HepG2 (cell line): ENCODE measurements at regions of chr6 and their contacts with region 1.

Region 1: DNA sequence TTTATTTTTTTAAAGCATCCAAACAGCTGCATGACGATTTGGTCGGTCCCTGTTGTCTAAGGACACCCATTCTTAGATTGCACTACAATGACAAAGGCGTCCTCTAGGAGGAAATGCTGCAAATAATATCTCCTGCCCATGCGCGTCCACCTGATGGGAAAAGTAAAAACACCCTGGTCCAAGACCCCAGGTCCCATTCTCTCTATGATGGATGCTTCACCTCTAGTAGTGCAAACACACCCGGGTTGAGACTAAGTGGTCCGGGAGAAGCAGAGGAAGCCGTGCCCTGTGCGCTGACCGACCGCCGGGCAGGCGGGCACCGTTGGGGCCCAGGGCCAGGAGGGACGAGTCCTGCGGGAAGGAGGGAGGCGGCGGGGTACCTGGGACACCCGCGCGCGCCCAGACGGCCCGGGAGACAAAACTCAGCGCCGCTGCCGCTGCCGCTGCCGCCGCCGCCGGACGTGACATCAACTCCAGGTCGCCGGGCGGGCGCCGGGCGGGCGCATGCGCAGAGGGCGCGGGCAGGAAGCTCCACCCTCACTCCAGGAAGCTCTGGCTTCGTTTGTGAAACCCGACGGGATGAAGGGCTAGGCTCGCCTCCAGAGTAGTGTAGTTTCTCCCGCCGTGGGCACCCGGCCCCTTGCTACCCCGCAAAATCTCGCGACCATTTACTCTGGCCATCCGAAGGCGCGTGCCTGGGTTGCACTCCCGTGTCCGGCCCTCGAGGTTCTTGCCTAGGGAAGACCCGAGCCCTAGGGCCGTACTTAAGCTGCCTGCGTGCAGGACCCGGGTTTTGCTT is at the start of gene TBC1D7:
- DNase-seq: peak; percentile 92
- ATAC-seq: peak; percentile 92
- H3K4me3 ChIP-seq: peak within 1 kb of the TSS; percentile 72 to 92 (median 90)
- H3K27ac ChIP-seq: peak within 1 kb of the TSS; percentile 81
- H3K4me1 ChIP-seq: peaks cover 45% of the 10 kb centered on the region
- H3K27me3 ChIP-seq: peaks cover 0 to 4% of the 10 kb centered on the region in 2 experiments; a peak in 2 of 5 replicates
- CTCF ChIP-seq: peak; percentile 28
- EP300 ChIP-seq: no peak
- POLR2A ChIP-seq: peak; percentile 74 to 94
- RAD21 ChIP-seq: peak; percentile 22; the same call in 1 of the 2 replicates
- total RNA-seq, gene TBC1D7: 23.3 and 28.5 TPM in 2 replicates

Region 2: DNA sequence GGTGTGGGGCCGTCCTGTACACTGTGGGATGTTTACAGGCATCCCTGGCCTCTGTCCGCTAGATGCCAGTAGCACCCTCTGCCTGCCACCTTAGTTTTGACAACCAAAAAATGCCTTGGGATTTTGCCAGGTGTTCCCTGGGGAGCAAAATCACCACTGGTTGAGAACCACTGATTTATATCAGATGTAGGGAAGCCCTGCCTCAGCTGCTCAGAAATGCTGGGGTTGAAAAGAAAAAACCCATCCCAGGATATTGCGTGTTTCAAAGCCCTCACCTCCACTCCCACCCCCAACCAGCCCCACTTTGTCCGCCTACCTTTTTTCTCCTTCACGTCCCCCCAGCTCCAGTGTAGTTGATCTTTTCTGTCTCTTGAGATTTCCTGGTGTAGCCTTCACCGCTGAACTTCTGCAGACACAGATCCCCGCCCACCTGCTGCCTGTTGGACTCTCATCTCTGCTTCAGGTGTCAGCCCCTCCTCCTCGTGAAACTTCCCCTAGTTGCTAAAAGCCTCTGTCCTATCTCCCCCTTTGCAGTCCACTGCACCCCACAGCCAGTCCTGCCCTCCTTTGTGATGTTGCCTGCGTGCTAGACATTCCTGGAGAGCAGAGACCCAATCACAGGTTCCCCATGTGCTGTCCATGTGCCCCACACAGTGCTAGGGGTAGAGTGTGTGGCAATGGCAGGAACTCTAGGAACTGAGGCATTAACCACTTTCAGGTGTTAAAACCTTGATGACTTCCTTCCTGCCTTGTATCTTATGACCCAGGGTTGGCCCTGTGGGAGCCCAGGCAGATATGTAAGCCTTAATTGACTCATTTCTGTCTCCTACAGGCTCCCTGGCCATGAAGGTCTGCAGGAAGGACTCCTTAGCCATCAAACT is 98.8 kb before region 1 on chr6:
- CTCF ChIA-PET with region 1: interaction called, 12 read pairs
- POLR2A ChIA-PET with region 1: no interaction called
- in situ Hi-C with region 1: no loop called
- intact Hi-C with region 1: loop called (anchors 1 kb)
- DNase-seq: peak; percentile 49
- ATAC-seq: peak; percentile 94
- H3K4me3 ChIP-seq: peak overlapping the region in 1 of 3 experiments; percentile 2; a peak in 1 of 6 replicates
- H3K27ac ChIP-seq: no peak overlapping the region
- H3K4me1 ChIP-seq: peaks cover 13% of the 10 kb centered on the region
- H3K27me3 ChIP-seq: peaks cover 0 to 17% of the 10 kb centered on the region in 2 experiments; a peak in 2 of 5 replicates
- CTCF ChIP-seq: peak; percentile 73
- EP300 ChIP-seq: no peak
- POLR2A ChIP-seq: no peak
- RAD21 ChIP-seq: peak; percentile 71

Region 3: GRCh38 chr6:13289789-13290318 is 38.4 kb before region 1 on chr6:
- CTCF ChIA-PET with region 1: interaction called, 3 read pairs
- POLR2A ChIA-PET with region 1: interaction called, 17 read pairs
- in situ Hi-C with region 1: no loop called
- intact Hi-C with region 1: loop called (anchors 2 kb)
- DNase-seq: peak; percentile 98
- ATAC-seq: peak; percentile 97
- H3K4me3 ChIP-seq: peak overlapping the region; percentile 2 to 13 (median 8); a peak in 3 of 6 replicates
- H3K27ac ChIP-seq: peak overlapping the region; percentile 78
- H3K4me1 ChIP-seq: peaks cover 26% of the 10 kb centered on the region
- H3K27me3 ChIP-seq: no peaks in the 10 kb centered on the region
- CTCF ChIP-seq: no peak
- EP300 ChIP-seq: peak in 1 of 2 experiments; percentile 71; a peak in 2 of 4 replicates
- POLR2A ChIP-seq: no peak
- RAD21 ChIP-seq: no peak

Region 4: GRCh38 chr6:13349811-13350506 is 21.7 kb after region 1 on chr6:
- CTCF ChIA-PET with region 1: no interaction called
- POLR2A ChIA-PET with region 1: no interaction called
- in situ Hi-C with region 1: no loop called
- intact Hi-C with region 1: no loop called
- DNase-seq: no peak
- ATAC-seq: no peak
- H3K4me3 ChIP-seq: no peak overlapping the region
- H3K27ac ChIP-seq: no peak overlapping the region
- H3K4me1 ChIP-seq: peaks cover 9% of the 10 kb centered on the region
- H3K27me3 ChIP-seq: no peaks in the 10 kb centered on the region; a peak in 1 of 5 replicates
- CTCF ChIP-seq: no peak
- EP300 ChIP-seq: no peak
- POLR2A ChIP-seq: no peak
- RAD21 ChIP-seq: no peak

Region 5: DNA sequence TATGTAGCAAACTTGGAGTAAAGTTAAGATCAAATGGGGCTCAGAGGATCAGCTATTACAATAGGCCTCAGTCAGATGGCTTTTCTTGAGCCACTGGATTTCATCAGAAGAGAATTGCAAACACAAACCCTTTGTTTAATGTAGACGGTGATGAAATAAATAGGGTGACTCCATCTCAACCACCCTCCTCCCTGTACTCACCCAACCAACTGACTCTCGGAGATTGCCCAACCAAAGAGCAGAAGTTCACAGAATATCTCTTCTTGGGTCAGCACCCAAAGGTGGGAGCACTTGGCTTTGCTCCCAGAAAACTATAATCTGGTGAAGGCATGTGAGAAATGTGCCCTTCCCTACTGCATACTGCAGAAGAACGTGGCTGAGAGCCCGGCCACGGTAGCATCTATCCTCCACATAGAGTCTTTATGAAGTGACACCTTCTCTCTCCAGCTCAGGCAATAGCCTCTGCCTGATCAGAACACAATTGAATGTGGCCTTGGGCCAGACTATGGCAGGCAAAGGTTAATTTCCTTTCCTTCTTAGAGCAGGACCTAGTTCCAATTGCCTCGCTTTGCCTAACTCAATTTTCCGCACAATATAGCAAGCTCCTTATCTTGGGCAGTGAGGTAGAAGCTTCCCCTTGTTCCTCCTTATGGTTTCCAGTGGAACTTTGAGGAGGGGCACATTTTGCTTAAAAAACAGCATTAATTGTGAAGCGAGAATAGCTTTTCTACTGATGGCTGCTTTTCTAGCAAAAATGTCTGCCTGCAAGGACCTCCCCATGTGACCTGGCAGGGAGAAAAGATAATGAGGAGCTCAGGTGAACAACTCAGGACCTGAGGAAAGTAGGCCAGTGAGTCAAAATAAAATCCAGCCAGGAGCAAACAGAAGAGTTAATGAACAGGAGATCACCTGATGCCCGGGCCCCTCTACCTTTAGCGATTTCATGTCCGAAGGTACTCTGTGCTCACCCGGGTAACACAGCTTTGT is 79.7 kb after region 1 on chr6:
- CTCF ChIA-PET with region 1: no interaction called
- POLR2A ChIA-PET with region 1: interaction called, 14 read pairs
- in situ Hi-C with region 1: no loop called
- intact Hi-C with region 1: no loop called
- DNase-seq: peak; percentile 100
- ATAC-seq: peak; percentile 82
- H3K4me3 ChIP-seq: peak overlapping the region; percentile 8 to 23 (median 19); a peak in 4 of 6 replicates
- H3K27ac ChIP-seq: peak overlapping the region; percentile 78
- H3K4me1 ChIP-seq: peaks cover 74% of the 10 kb centered on the region
- H3K27me3 ChIP-seq: no peaks in the 10 kb centered on the region
- CTCF ChIP-seq: no peak
- EP300 ChIP-seq: peak; percentile 91 to 96
- POLR2A ChIP-seq: peak in 1 of 2 experiments; percentile 39; a peak in 1 of 4 replicates
- RAD21 ChIP-seq: peak; percentile 12; the same call in 1 of the 2 replicates

Region 6: GRCh38 chr6:13487122-13488014 is 159.1 kb after region 1 on chr6 and contains the start of gene GFOD1:
- CTCF ChIA-PET with region 1: no interaction called
- POLR2A ChIA-PET with region 1: interaction called, 9 read pairs
- in situ Hi-C with region 1: no loop called
- intact Hi-C with region 1: loop called (anchors 2 kb)
- DNase-seq: peak; percentile 63
- ATAC-seq: peak; percentile 80
- H3K4me3 ChIP-seq: peak within 1 kb of the TSS; percentile 69 to 82 (median 80)
- H3K27ac ChIP-seq: peak within 1 kb of the TSS; percentile 25
- H3K4me1 ChIP-seq: peaks cover 47% of the 10 kb centered on the region
- H3K27me3 ChIP-seq: no peaks in the 10 kb centered on the region; a peak in 1 of 5 replicates
- CTCF ChIP-seq: no peak
- EP300 ChIP-seq: no peak
- POLR2A ChIP-seq: peak; percentile 44 to 70; a peak in 3 of 4 replicates
- RAD21 ChIP-seq: peak; percentile 76
- total RNA-seq, gene GFOD1: 6.4 TPM in 2 replicates

Region 7: GRCh38 chr6:13614926-13615798 is 286.9 kb after region 1 on chr6 and contains the start of gene NOL7:
- CTCF ChIA-PET with region 1: no interaction called
- POLR2A ChIA-PET with region 1: interaction called, 16 read pairs
- in situ Hi-C with region 1: no loop called
- intact Hi-C with region 1: no loop called
- DNase-seq: peak; percentile 97
- ATAC-seq: peak; percentile 92
- H3K4me3 ChIP-seq: peak within 1 kb of the TSS; percentile 89 to 97 (median 93)
- H3K27ac ChIP-seq: peak within 1 kb of the TSS; percentile 91
- H3K4me1 ChIP-seq: peaks cover 35% of the 10 kb centered on the region
- H3K27me3 ChIP-seq: no peaks in the 10 kb centered on the region; a peak in 1 of 5 replicates
- CTCF ChIP-seq: peak; percentile 100
- EP300 ChIP-seq: peak in 1 of 2 experiments; percentile 11; a peak in 1 of 4 replicates
- POLR2A ChIP-seq: peak; percentile 93 to 96
- RAD21 ChIP-seq: peak; percentile 55; the same call in 1 of the 2 replicates
- total RNA-seq, gene NOL7: 186 and 215 TPM in 2 replicates